Esophagus muscularis mucosa (tissue), 4 donors: ENCODE measurements at regions of chr13 and their contacts with region 1.

Region 1: DNA sequence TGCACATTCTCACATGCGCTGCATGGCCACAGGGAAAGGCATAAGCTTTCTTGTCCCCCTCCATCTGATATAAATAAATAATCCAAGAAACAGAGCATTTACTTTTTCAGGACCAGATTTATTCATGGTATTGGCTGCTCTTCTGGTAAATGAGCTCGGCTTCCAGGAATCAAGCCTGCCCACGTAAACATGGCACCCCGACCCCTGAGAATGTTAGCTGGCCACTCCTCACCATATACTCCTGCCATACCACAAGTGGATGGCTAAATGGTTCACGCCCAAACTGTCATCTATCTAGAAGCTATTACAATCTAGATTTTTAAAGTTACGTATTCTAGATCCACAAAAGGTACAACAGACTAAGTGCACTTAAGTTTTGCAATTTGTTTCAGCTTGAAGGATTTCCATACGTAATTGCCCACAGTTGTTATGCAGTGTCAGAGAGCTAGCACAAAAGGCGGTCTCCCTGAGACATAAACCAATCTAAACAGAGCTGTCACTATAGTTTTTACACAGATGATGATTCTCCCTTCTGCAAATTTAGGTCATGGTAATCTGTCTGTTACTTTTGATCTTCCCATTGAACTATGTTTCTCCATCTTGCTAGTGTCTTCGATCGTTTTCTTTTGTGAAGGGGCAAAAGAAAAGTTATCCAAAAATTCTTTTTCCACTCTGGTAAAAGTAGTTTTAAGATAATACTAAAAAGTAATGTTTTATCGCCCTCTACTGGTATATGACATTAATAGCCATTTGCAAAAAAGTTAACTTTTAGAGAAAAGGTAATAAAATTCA is 16.2 kb upstream of the FOXO1 start:
- DNase-seq: no peak
- H3K4me3 ChIP-seq: no peak overlapping the region
- H3K27ac ChIP-seq: no peak overlapping the region
- H3K4me1 ChIP-seq: peaks cover 11 to 24% (median 23%) of the 10 kb centered on the region in 4 donors
- H3K27me3 ChIP-seq: no peaks in the 10 kb centered on the region
- CTCF ChIP-seq: peak; percentile 56 to 78 (median 70)
- EP300 ChIP-seq: no peak
- POLR2A ChIP-seq: no peak

Region 2: GRCh38 chr13:39684531-39685137 is 998.0 kb before region 1 on chr13:
- intact Hi-C with region 1: loop called (anchors 2 kb)
- DNase-seq: no peak
- H3K4me3 ChIP-seq: no peak overlapping the region
- H3K27ac ChIP-seq: no peak overlapping the region
- H3K4me1 ChIP-seq: no peaks in the 10 kb centered on the region
- H3K27me3 ChIP-seq: no peaks in the 10 kb centered on the region
- CTCF ChIP-seq: peak; percentile 37 to 50 (median 50)
- EP300 ChIP-seq: no peak
- POLR2A ChIP-seq: no peak

Region 3: GRCh38 chr13:39777527-39778061 is 905.1 kb before region 1 on chr13:
- intact Hi-C with region 1: loop called (anchors 5 kb)
- DNase-seq: no peak
- H3K4me3 ChIP-seq: no peak overlapping the region
- H3K27ac ChIP-seq: no peak overlapping the region
- H3K4me1 ChIP-seq: peaks cover 0 to 13% (median 9%) of the 10 kb centered on the region in 4 donors
- H3K27me3 ChIP-seq: no peaks in the 10 kb centered on the region
- CTCF ChIP-seq: peak; percentile 3 to 23 (median 22)
- EP300 ChIP-seq: no peak
- POLR2A ChIP-seq: no peak

Region 4: DNA sequence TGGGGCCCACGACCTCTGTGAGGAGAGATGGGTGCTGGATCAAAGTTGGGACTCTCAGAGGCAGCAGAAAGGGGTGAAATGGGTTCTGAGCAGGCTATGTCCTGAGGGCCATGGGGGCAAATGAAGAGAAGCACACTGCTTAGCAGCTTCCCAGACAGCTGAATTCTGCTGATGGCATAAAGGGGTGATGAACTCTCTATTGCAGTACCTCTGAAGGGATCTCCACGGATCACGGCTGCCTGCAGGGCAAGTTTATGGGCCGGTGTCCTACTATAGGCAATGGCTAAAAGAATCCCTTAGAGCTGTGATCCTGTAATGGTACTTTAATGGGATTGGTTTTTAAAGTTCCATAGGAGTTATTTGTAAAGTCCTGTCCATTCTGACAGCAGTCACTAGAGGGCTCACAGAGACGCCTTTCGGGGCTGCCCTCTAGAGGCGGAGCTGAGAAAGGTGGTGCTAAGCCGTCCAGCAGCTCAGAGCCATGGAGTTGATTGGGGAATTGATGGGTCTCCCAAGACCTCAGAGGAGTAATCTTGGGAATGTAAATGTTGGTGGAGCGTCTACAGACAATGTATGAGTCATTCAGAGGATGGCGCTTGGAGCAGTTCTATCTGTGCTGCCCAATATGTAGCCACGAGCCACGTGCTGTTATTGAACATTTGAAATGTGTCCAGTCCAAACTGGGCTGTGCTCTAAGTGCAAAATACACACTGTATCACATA is 739.9 kb before region 1 on chr13:
- intact Hi-C with region 1: loop called (anchors 10 kb)
- DNase-seq: no peak
- H3K4me3 ChIP-seq: no peak overlapping the region
- H3K27ac ChIP-seq: no peak overlapping the region
- H3K4me1 ChIP-seq: peaks cover 0 to 11% (median 6%) of the 10 kb centered on the region in 4 donors
- H3K27me3 ChIP-seq: no peaks in the 10 kb centered on the region
- CTCF ChIP-seq: peak; percentile 74 to 90 (median 84)
- EP300 ChIP-seq: no peak
- POLR2A ChIP-seq: no peak

Region 5: DNA sequence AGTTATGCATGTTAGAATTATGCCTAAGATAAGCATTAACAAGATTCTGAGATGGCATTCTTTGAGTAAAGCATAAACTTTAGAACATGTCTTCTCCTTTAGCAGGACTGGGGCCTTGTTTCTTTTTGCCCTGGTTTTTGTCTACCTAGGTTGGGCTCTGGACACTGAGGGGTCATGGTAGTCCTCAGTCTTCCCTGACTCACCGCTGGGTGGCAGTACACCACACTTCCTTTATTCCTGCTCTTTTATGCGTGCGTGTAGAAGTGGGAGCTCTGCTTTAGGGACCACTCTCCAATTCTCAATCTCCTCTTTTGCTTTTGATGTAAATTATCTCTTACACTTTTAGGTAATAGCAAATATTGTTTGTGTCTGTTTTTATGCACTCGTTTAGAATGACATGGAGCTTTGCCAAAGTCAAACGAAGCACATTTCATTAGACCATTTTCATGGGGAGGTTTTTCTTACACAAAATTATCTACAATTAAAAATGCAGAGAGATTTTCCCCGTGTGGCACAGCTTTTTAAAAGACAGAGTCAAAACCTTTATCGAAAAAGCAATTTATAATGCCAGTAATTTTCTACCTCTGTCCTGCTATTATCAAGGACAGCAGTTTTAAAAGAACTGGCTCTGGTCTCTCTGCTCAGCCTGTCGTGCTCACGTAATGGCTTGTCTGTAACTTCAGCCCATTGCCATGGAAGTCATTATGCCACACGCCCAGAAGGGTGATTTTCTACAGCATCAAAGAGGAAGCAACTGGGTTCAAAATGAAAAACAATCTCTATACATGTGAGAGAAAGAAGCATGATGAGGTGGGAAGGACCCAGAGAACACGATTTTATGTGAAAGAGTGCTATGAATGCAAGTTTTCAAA is 613.2 kb before region 1 on chr13:
- intact Hi-C with region 1: loop called (anchors 2 kb)
- DNase-seq: peak; percentile 91
- H3K4me3 ChIP-seq: no peak overlapping the region
- H3K27ac ChIP-seq: peak overlapping the region in 1 of 4 donors; percentile 23
- H3K4me1 ChIP-seq: peaks cover 0 to 19% (median 16%) of the 10 kb centered on the region in 4 donors
- H3K27me3 ChIP-seq: no peaks in the 10 kb centered on the region
- CTCF ChIP-seq: peak; percentile 87 to 90 (median 89)
- EP300 ChIP-seq: no peak
- POLR2A ChIP-seq: no peak

Region 6: GRCh38 chr13:40728595-40728994 is 46.0 kb after region 1 on chr13:
- intact Hi-C with region 1: no loop called
- DNase-seq: no peak
- H3K4me3 ChIP-seq: no peak overlapping the region
- H3K27ac ChIP-seq: no peak overlapping the region
- H3K4me1 ChIP-seq: no peaks in the 10 kb centered on the region
- H3K27me3 ChIP-seq: no peaks in the 10 kb centered on the region
- CTCF ChIP-seq: no peak
- EP300 ChIP-seq: no peak
- POLR2A ChIP-seq: no peak

Region 7: GRCh38 chr13:41652727-41653361 is 970.2 kb after region 1 on chr13:
- intact Hi-C with region 1: no loop called
- DNase-seq: no peak
- H3K4me3 ChIP-seq: no peak overlapping the region
- H3K27ac ChIP-seq: peak overlapping the region; percentile 14 to 47 (median 35)
- H3K4me1 ChIP-seq: peaks cover 17 to 34% (median 28%) of the 10 kb centered on the region in 4 donors
- H3K27me3 ChIP-seq: no peaks in the 10 kb centered on the region
- CTCF ChIP-seq: peak; percentile 62 to 65 (median 63)
- EP300 ChIP-seq: no peak
- POLR2A ChIP-seq: no peak